ENCODE measurements at regions of chr12 and their contacts with region 1.

Region 1: GRCh38 chr12:124224535-124225110 is 70.3 kb upstream of the RFLNA start:
- DNase-seq: no peak
- H3K4me3 ChIP-seq: no peak overlapping the region
- H3K27ac ChIP-seq: no peak overlapping the region
- H3K4me1 ChIP-seq: no peaks in the 10 kb centered on the region
- H3K27me3 ChIP-seq: no peaks in the 10 kb centered on the region
- CTCF ChIP-seq: no peak

Region 2: GRCh38 chr12:123705935-123706334 is 518.7 kb before region 1 on chr12:
- CTCF ChIA-PET with region 1: no interaction called
- dilution Hi-C with region 1: no loop called
- in situ Hi-C with region 1: no loop called
- intact Hi-C with region 1: no loop called
- DNase-seq: no peak
- H3K4me3 ChIP-seq: no peak overlapping the region
- H3K27ac ChIP-seq: no peak overlapping the region
- H3K4me1 ChIP-seq: no peaks in the 10 kb centered on the region
- H3K27me3 ChIP-seq: no peaks in the 10 kb centered on the region
- CTCF ChIP-seq: no peak

Region 3: GRCh38 chr12:124036674-124037109 is 187.9 kb before region 1 on chr12:
- CTCF ChIA-PET with region 1: no interaction called
- dilution Hi-C with region 1: no loop called
- in situ Hi-C with region 1: no loop called
- intact Hi-C with region 1: loop called (anchors 1 kb)
- DNase-seq: no peak
- H3K4me3 ChIP-seq: no peak overlapping the region
- H3K27ac ChIP-seq: no peak overlapping the region
- H3K4me1 ChIP-seq: no peaks in the 10 kb centered on the region
- H3K27me3 ChIP-seq: no peaks in the 10 kb centered on the region
- CTCF ChIP-seq: peak; percentile 82 to 95